Activated naive CD4-positive, alpha-beta T cell treated with anti-CD3 and anti-CD28 coated beads for 36 hours (primary cell): ENCODE measurements at regions of chr11 and their contacts with region 1.

Region 1: DNA sequence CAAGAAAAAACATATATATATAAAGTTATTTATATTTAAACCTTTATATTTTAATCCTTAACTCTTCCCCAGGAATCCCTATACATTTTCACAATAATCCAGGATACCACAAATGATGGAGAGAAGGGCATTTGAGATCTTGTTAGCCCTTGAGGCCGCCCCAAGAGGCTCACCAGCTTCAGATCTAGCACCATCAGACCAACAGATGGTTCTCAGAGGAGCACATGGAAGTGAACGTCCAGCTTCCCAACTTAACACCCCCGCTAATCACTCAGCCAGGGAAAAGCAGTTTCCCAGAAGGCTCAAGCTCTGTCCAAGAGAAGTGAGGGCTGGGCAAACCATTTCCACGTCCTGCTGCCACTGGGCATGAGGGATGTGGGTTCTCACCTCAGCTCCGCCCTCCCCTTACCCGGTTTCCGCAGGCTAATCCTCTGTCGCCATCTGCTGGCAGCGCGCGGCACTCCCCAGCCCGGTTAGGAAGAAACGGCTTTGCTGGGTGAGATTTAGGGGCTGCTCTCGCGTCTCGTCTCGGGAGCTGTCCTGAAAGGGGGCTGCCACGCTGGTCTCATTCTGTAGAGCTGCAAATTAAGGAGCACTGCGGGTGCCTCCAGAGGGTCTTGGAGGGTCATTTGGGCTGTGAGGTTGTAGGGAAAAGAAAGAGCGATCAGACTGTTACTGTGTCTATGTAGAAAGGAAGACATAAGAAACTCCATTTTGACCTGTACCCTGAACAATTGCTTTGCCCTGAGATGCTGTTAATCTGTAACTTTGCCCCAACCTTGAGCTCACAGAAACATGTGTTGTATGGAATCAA is 6.8 kb upstream of the FAM111A start:
- DNase-seq: peak; percentile 93
- H3K4me3 Mint-ChIP-seq: peak overlapping the region; percentile 26
- H3K27ac Mint-ChIP-seq: no peak overlapping the region
- H3K4me1 Mint-ChIP-seq: peaks cover 6% of the 10 kb centered on the region
- H3K27me3 Mint-ChIP-seq: no peaks in the 10 kb centered on the region

Region 2: GRCh38 chr11:58592760-58593472 is 542.9 kb before region 1 on chr11:
- CTCF ChIA-PET with region 1: no interaction called
- intact Hi-C with region 1: no loop called
- DNase-seq: peak; percentile 71
- H3K4me3 Mint-ChIP-seq: no peak overlapping the region
- H3K27ac Mint-ChIP-seq: peak overlapping the region; percentile 67
- H3K4me1 Mint-ChIP-seq: peaks cover 73% of the 10 kb centered on the region
- H3K27me3 Mint-ChIP-seq: no peaks in the 10 kb centered on the region

Region 3: GRCh38 chr11:58829786-58830185 is 306.1 kb before region 1 on chr11:
- CTCF ChIA-PET with region 1: no interaction called
- intact Hi-C with region 1: no loop called
- DNase-seq: no peak
- H3K4me3 Mint-ChIP-seq: no peak overlapping the region
- H3K27ac Mint-ChIP-seq: no peak overlapping the region
- H3K4me1 Mint-ChIP-seq: no peaks in the 10 kb centered on the region
- H3K27me3 Mint-ChIP-seq: peaks cover 16% of the 10 kb centered on the region

Region 4: DNA sequence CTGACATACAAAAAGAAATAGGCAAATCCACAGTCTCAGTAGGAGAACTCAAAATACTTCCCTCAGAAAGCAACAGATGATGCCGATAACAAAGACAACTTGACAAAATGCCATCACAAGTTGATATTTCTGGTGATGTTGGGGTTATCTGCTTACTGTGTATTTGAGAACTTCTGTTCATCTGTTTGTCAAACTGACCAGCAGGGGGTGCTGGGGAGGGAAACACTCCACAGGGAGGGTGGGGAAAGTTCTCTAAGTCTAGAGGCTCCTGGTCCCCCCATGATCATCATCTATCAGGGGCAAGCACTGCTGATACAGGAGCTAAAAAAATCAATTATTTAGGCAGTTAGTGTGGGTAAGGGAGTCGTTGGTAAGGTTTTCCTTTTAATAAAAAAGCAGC is 177.4 kb before region 1 on chr11:
- CTCF ChIA-PET with region 1: no interaction called
- intact Hi-C with region 1: loop called (anchors 2 kb)
- DNase-seq: peak; percentile 62
- H3K4me3 Mint-ChIP-seq: no peak overlapping the region
- H3K27ac Mint-ChIP-seq: no peak overlapping the region
- H3K4me1 Mint-ChIP-seq: peaks cover 8% of the 10 kb centered on the region
- H3K27me3 Mint-ChIP-seq: peaks cover 6% of the 10 kb centered on the region

Region 5: DNA sequence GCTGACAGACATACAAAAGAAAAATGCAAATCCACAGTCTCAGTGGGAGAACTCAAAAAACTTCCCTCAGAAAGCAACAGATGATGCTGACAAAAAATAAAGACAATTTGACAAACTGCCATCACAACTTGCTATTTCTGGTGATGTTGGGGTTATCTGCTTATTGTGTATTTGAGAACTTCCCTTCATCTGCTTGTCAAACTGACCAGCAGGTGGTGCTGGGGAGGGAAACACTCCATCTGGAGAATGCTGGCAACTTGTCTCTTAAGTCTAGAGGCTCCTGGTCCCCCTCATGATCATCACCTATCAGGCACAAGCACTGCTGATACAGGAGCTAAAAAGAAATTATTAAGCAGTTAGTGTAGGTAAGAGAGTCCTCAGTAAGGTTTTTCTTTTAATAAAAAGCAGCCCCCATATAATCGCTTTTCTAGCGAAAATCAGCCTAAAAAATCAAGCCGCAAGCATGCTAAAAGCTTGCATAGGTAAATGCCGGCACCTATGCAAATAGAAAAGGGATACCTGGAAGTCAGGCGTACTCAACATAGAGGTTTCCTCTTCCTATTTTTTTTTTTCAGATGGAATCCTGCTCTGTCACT is 38.6 kb before region 1 on chr11:
- CTCF ChIA-PET with region 1: interaction called, 45 read pairs
- intact Hi-C with region 1: loop called (anchors 1 kb)
- DNase-seq: peak; percentile 79
- H3K4me3 Mint-ChIP-seq: no peak overlapping the region
- H3K27ac Mint-ChIP-seq: no peak overlapping the region
- H3K4me1 Mint-ChIP-seq: peaks cover 5% of the 10 kb centered on the region
- H3K27me3 Mint-ChIP-seq: peaks cover 21% of the 10 kb centered on the region

Region 6: GRCh38 chr11:59417023-59417422 is 281.2 kb after region 1 on chr11:
- CTCF ChIA-PET with region 1: no interaction called
- intact Hi-C with region 1: no loop called
- DNase-seq: no peak
- H3K4me3 Mint-ChIP-seq: no peak overlapping the region
- H3K27ac Mint-ChIP-seq: no peak overlapping the region
- H3K4me1 Mint-ChIP-seq: peaks cover 9% of the 10 kb centered on the region
- H3K27me3 Mint-ChIP-seq: peaks cover 30% of the 10 kb centered on the region